ENCODE measurements at regions of chr2 and their contacts with region 1.

Region 1: GRCh38 chr2:120174963-120175581 is 48.1 kb downstream of the TMEM185B start:
- DNase-seq: peak; percentile 25 to 42
- H3K4me3 ChIP-seq: no peak overlapping the region
- H3K27ac ChIP-seq: no peak overlapping the region
- H3K4me1 ChIP-seq: no peaks in the 10 kb centered on the region
- H3K27me3 ChIP-seq: no peaks in the 10 kb centered on the region
- CTCF ChIP-seq: peak; percentile 97

Region 2: GRCh38 chr2:119641562-119642258 is 533.4 kb before region 1 on chr2:
- CTCF ChIA-PET with region 1: interaction called, 6 read pairs
- POLR2A ChIA-PET with region 1: no interaction called
- intact Hi-C with region 1: loop called (anchors 1 kb)
- DNase-seq: peak; percentile 56 to 72
- H3K4me3 ChIP-seq: no peak overlapping the region
- H3K27ac ChIP-seq: no peak overlapping the region
- H3K4me1 ChIP-seq: peaks cover 10% of the 10 kb centered on the region
- H3K27me3 ChIP-seq: peaks cover 8% of the 10 kb centered on the region; the same call in 1 of the 2 replicates
- CTCF ChIP-seq: peak; percentile 95

Region 3: DNA sequence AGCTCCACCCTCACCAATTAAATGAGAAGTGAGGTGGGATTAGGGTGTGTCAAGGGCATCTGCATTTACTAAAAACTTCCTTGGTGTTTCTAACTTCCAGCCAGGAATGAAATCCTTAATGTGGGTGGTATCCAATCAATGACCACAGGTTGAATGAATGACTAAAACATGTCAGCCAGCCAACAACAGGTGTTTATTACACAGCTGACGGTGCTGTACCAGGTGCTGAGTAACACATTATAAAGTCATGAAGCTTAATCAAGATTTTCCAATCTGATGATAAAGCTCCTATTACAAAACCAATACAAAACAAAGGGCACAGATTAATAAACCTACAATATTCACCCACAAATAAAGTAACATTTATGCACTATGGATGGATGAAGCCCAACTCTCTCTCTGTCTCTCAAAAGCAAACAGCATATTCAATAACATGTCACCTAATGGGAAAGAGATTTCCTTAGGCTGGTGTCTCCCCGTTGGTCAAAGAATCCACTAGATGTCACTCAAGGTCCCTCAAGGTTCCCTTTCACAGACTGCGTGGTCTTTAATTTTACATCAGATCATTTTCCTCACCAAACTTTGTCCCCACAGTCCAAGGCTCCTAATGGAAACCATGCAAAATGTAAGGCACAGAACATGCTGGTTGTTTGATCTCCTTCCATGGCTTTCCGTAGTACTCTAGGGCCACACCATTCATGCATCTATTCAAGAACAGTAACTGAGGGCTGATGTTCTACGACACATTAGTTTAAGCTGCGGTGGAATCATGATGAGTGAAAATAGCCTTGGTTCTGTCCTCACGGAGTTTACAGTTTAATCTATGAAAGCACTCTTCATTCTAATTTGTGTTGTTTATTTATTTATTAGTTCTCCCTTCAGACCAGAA is 421.8 kb before region 1 on chr2:
- CTCF ChIA-PET with region 1: no interaction called
- POLR2A ChIA-PET with region 1: no interaction called
- intact Hi-C with region 1: loop called (anchors 1 kb)
- DNase-seq: no peak
- H3K4me3 ChIP-seq: no peak overlapping the region
- H3K27ac ChIP-seq: no peak overlapping the region
- H3K4me1 ChIP-seq: peaks cover 16% of the 10 kb centered on the region
- H3K27me3 ChIP-seq: no peaks in the 10 kb centered on the region
- CTCF ChIP-seq: peak; percentile 73

Region 4: DNA sequence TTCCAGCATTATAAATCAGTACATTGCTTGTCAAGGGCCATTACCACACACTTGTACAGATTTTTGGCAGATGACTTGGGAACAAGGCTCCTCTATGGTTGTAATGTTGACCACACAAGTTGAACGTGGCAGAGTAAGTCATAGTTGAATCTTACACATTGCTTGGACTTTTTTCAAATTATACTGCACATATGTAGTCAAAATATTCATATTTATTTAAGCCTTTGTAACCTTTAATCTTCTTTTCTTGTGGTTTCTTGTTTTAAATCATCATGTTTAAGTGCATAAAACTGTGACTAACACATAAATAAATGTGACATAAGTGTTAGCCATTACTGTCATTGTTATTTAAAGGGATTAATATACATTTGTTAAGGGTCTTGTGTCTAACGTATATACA is 214.3 kb before region 1 on chr2:
- CTCF ChIA-PET with region 1: interaction called, 11 read pairs
- POLR2A ChIA-PET with region 1: no interaction called
- intact Hi-C with region 1: no loop called
- DNase-seq: no peak
- H3K4me3 ChIP-seq: no peak overlapping the region
- H3K27ac ChIP-seq: no peak overlapping the region
- H3K4me1 ChIP-seq: no peaks in the 10 kb centered on the region
- H3K27me3 ChIP-seq: no peaks in the 10 kb centered on the region
- CTCF ChIP-seq: no peak

Region 5: GRCh38 chr2:120109186-120110061 is 65.6 kb before region 1 on chr2:
- CTCF ChIA-PET with region 1: interaction called, 9 read pairs
- POLR2A ChIA-PET with region 1: no interaction called
- intact Hi-C with region 1: loop called (anchors 2 kb)
- DNase-seq: peak in 1 of 2 experiments; percentile 54
- H3K4me3 ChIP-seq: no peak overlapping the region
- H3K27ac ChIP-seq: no peak overlapping the region
- H3K4me1 ChIP-seq: peaks cover 32% of the 10 kb centered on the region
- H3K27me3 ChIP-seq: no peaks in the 10 kb centered on the region
- CTCF ChIP-seq: peak; percentile 73

Region 6: GRCh38 chr2:120222186-120223033 is 47.3 kb after region 1 on chr2:
- CTCF ChIA-PET with region 1: no interaction called
- POLR2A ChIA-PET with region 1: no interaction called
- intact Hi-C with region 1: no loop called
- DNase-seq: no peak
- H3K4me3 ChIP-seq: peak overlapping the region; percentile 72; the same call in 1 of the 2 replicates
- H3K27ac ChIP-seq: peak overlapping the region; percentile 73; the same call in 1 of the 2 replicates
- H3K4me1 ChIP-seq: peaks cover 45% of the 10 kb centered on the region
- H3K27me3 ChIP-seq: no peaks in the 10 kb centered on the region
- CTCF ChIP-seq: no peak

Measured in PC-9 (cell line).